ENCODE measurements at regions of chr14 and their contacts with region 1.

Region 1: DNA sequence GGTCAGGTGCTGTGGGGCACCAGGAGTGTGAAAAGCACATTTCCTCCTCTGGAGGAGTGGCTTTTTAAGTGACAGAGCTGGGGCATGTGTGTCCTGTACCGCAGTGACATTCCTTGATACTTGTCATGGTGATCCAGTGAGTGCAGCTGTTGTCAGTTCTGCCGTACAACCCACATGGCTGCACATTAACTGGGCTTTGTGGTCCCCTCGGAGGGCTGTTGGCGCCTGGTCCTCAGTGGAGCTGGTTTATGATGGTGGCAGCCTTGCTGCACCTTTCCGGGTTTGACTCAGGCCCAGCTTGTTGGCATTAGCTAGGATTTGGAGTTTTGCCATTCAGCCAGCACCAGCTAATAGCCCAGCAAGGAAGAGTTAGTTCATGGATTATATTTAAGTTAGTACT is 77.0 kb downstream of the SLC25A47 start:
- DNase-seq: no peak
- CTCF ChIP-seq: no peak

Region 2: DNA sequence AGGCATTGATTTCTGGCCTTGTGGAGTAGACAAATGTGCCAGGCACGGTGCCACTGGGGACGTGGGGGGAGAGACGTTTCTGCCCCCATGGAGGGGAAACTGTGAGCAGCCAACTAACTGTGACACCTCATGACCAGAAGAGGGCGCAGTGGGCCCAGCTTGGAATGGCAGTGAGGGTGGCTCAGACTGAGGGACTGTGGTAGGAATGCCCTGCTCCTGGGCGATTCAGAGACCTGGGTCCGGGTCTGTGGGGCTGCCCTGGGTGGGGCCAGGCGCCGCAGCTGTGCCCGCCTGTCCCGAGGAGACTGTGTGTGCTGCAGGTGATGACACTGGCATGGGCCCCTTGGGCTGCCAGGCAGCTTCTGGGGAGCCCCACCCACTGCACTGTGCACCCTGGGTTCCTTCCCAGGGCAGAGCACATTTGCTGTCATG is 16.4 kb before region 1 on chr14:
- CTCF ChIA-PET with region 1: interaction called, 49 read pairs
- POLR2A ChIA-PET with region 1: no interaction called
- DNase-seq: peak; percentile 83
- CTCF ChIP-seq: peak; percentile 91

Measured in GM10248 (cell line).